Naive thymus-derived CD4-positive, alpha-beta T cell (primary cell): ENCODE measurements at regions of chr1 and their contacts with region 1.

Region 1: DNA sequence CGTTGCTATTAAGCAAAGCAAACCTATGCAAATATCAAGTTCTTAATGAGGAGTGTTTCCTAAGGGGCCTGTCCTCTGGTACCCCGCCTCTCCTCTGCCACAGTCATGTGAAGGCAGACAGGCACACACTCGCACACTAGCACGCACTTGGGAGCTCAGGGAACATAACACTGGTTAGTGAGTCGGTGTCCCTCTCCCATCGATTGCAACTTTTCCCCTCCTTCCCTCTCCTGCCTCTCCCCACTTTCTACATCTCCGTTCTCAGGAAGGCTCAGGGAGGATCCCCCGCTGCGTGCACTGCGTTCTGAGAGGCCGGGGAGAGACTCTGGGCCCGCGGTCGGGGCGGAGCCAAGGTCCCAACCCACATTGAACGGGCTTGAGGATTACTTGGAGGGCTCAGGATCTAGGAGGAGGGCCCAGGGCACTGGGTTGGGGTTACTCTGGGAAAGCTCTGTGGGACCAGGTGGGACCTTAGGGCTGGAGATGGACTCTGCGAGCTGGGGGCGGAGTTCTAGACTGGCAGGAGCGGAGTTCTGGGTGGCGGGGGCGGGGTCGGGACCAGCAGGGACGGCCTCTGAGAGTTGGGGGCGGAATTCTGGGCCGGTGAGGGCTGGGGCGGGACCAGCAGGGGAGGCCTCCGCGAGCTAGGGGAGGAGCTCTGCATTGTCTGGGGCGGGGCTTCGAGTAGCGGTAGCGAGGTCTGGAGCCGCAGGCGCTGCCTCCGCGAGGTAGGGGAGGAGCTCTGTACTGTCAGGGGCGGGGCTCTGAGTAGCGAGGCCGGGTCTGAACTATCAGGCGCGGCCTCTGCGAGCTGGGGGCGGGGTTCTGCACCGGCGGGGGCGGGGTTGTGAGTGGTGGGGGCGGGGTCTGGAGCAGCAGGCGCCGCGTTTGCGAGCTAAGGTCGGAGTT is 533 bp upstream of the LEPR start:
- DNase-seq: peak; percentile 93 to 99 (median 98)
- ATAC-seq: peak; percentile 97
- H3K4me3 ChIP-seq: peak overlapping the region; percentile 86
- H3K4me3 Mint-ChIP-seq: no peak overlapping the region
- H3K27ac ChIP-seq: peak overlapping the region; percentile 78
- H3K27ac Mint-ChIP-seq: peak overlapping the region in 7 of 9 donors; percentile 84 to 97 (median 95)
- H3K4me1 ChIP-seq: peaks cover 0 to 8% of the 10 kb centered on the region in 2 donors
- H3K4me1 Mint-ChIP-seq: peaks cover 0 to 31% (median 22%) of the 10 kb centered on the region in 7 donors
- H3K27me3 ChIP-seq: no peaks in the 10 kb centered on the region
- H3K27me3 Mint-ChIP-seq: peaks cover 0 to 12% (median 0%) of the 10 kb centered on the region in 5 donors

Region 2: GRCh38 chr1:63522891-63523728 is 1896.8 kb before region 1 on chr1 and contains the starts of genes EFCAB7 and ITGB3BP:
- CTCF ChIA-PET with region 1: no interaction called
- POLR2A ChIA-PET with region 1: no interaction called
- intact Hi-C with region 1: loop called in 1 of 2 experiments (anchors 5 kb)
- DNase-seq: peak; percentile 73 to 86 (median 82)
- ATAC-seq: peak; percentile 92
- H3K4me3 ChIP-seq: peak within 1 kb of the TSS; percentile 83
- H3K4me3 Mint-ChIP-seq: peak within 1 kb of the TSS; percentile 82 to 100 (median 98)
- H3K27ac ChIP-seq: peak within 1 kb of the TSS; percentile 78
- H3K27ac Mint-ChIP-seq: peak within 1 kb of the TSS; percentile 93 to 99 (median 97)
- H3K4me1 ChIP-seq: peaks cover 7 to 13% of the 10 kb centered on the region in 2 donors
- H3K4me1 Mint-ChIP-seq: peaks cover 12 to 47% (median 36%) of the 10 kb centered on the region in 7 donors
- H3K27me3 ChIP-seq: no peaks in the 10 kb centered on the region
- H3K27me3 Mint-ChIP-seq: peaks cover 0 to 2% (median 0%) of the 10 kb centered on the region in 5 donors
- total RNA-seq, gene EFCAB7: 4.1 to 13.5 (median 9.2) TPM
- total RNA-seq, gene ITGB3BP: 16.5 to 52.6 (median 32.9) TPM

Region 3: DNA sequence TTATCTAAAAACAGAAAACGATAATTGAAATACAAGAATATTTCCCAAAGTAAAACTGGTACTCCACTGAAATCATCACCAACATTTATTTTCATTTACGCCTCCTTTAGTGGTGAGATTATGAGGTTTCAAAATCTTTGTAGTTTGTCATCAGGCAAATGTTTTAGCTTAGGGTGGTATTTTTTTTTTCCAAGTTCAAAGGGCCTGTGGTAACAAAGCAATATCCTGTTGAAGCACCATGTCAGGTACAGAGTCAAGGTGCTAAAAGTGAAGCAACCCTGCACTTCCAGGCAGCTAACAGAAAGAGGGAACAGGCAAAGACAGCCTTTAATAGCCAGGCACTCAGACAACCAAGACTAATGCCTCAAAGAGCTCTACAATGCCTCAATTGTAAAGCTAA is 542.8 kb before region 1 on chr1:
- CTCF ChIA-PET with region 1: no interaction called
- POLR2A ChIA-PET with region 1: no interaction called
- intact Hi-C with region 1: loop called in 1 of 2 experiments (anchors 5 kb)
- DNase-seq: peak in 7 of 9 donors; percentile 75 to 90 (median 87)
- ATAC-seq: peak; percentile 96
- H3K4me3 ChIP-seq: peak overlapping the region; percentile 8
- H3K4me3 Mint-ChIP-seq: peak overlapping the region; percentile 70 to 83 (median 76)
- H3K27ac ChIP-seq: peak overlapping the region; percentile 36
- H3K27ac Mint-ChIP-seq: peak overlapping the region; percentile 41 to 95 (median 90)
- H3K4me1 ChIP-seq: peaks cover 43 to 53% of the 10 kb centered on the region in 2 donors
- H3K4me1 Mint-ChIP-seq: peaks cover 38 to 88% (median 84%) of the 10 kb centered on the region in 7 donors
- H3K27me3 ChIP-seq: no peaks in the 10 kb centered on the region
- H3K27me3 Mint-ChIP-seq: no peaks in the 10 kb centered on the region

Region 4: GRCh38 chr1:65067491-65068201 is 352.3 kb before region 1 on chr1:
- CTCF ChIA-PET with region 1: no interaction called
- POLR2A ChIA-PET with region 1: interaction called, 4 read pairs
- intact Hi-C with region 1: loop called (anchors 1 to 2 kb)
- DNase-seq: peak; percentile 48 to 75 (median 67)
- ATAC-seq: peak; percentile 39
- H3K4me3 ChIP-seq: peak overlapping the region; percentile 78
- H3K4me3 Mint-ChIP-seq: peak overlapping the region; percentile 85 to 99 (median 97)
- H3K27ac ChIP-seq: peak overlapping the region; percentile 90
- H3K27ac Mint-ChIP-seq: peak overlapping the region; percentile 93 to 100 (median 100)
- H3K4me1 ChIP-seq: peaks cover 16 to 24% of the 10 kb centered on the region in 2 donors
- H3K4me1 Mint-ChIP-seq: peaks cover 43 to 62% (median 55%) of the 10 kb centered on the region in 7 donors
- H3K27me3 ChIP-seq: no peaks in the 10 kb centered on the region
- H3K27me3 Mint-ChIP-seq: no peaks in the 10 kb centered on the region

Region 5: GRCh38 chr1:65254319-65255034 is 165.5 kb before region 1 on chr1:
- CTCF ChIA-PET with region 1: no interaction called
- POLR2A ChIA-PET with region 1: interaction called, 7 read pairs
- intact Hi-C with region 1: loop called (anchors 1 to 2 kb)
- DNase-seq: peak; percentile 70 to 90 (median 82)
- ATAC-seq: peak; percentile 97
- H3K4me3 ChIP-seq: peak overlapping the region; percentile 80
- H3K4me3 Mint-ChIP-seq: peak overlapping the region; percentile 87 to 99 (median 92)
- H3K27ac ChIP-seq: peak overlapping the region; percentile 69
- H3K27ac Mint-ChIP-seq: peak overlapping the region in 5 of 9 donors; percentile 10 to 93 (median 78)
- H3K4me1 ChIP-seq: peaks cover 10 to 14% of the 10 kb centered on the region in 2 donors
- H3K4me1 Mint-ChIP-seq: peaks cover 12 to 23% (median 18%) of the 10 kb centered on the region in 7 donors
- H3K27me3 ChIP-seq: no peaks in the 10 kb centered on the region
- H3K27me3 Mint-ChIP-seq: peaks cover 0 to 31% (median 10%) of the 10 kb centered on the region in 5 donors

Region 6: DNA sequence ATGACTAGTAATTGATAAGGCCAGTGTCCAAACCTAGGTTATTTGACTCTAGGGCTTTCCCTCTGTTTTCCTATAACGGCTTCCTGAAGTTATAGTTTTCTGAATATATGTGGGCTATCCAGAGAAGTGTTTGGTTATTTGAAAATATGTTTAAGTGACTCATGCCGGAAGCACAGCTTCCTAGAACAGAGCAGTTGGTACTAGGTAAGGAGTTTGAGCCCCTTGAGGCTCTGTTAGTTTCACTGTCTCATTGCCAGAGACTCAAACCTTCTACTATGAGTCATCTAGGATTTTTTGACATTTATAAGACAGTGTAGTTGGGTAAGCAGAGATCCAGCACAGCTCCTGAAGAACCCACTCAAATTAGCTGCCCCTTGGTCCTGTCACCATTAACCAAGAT is 26.6 kb before region 1 on chr1:
- CTCF ChIA-PET with region 1: no interaction called
- POLR2A ChIA-PET with region 1: no interaction called
- intact Hi-C with region 1: loop called in 1 of 2 experiments (anchors 1 kb)
- DNase-seq: peak in 1 of 9 donors; percentile 24
- ATAC-seq: no peak
- H3K4me3 ChIP-seq: no peak overlapping the region
- H3K4me3 Mint-ChIP-seq: peak overlapping the region in 1 of 10 donors; percentile 62
- H3K27ac ChIP-seq: no peak overlapping the region
- H3K27ac Mint-ChIP-seq: peak overlapping the region in 1 of 9 donors; percentile 84
- H3K4me1 ChIP-seq: no peaks in the 10 kb centered on the region
- H3K4me1 Mint-ChIP-seq: peaks cover 0 to 81% (median 0%) of the 10 kb centered on the region in 7 donors
- H3K27me3 ChIP-seq: no peaks in the 10 kb centered on the region
- H3K27me3 Mint-ChIP-seq: no peaks in the 10 kb centered on the region

Region 7: GRCh38 chr1:66374561-66375111 is 954.7 kb after region 1 on chr1:
- CTCF ChIA-PET with region 1: no interaction called
- POLR2A ChIA-PET with region 1: no interaction called
- intact Hi-C with region 1: loop called in 1 of 2 experiments (anchors 1 kb)
- DNase-seq: peak in 7 of 9 donors; percentile 27 to 49 (median 40)
- ATAC-seq: peak; percentile 83
- H3K4me3 ChIP-seq: no peak overlapping the region
- H3K4me3 Mint-ChIP-seq: peak overlapping the region in 9 of 10 donors; percentile 46 to 83 (median 67)
- H3K27ac ChIP-seq: peak overlapping the region; percentile 62
- H3K27ac Mint-ChIP-seq: peak overlapping the region; percentile 88 to 96 (median 92)
- H3K4me1 ChIP-seq: peaks cover 51 to 53% of the 10 kb centered on the region in 2 donors
- H3K4me1 Mint-ChIP-seq: peaks cover 52 to 74% (median 65%) of the 10 kb centered on the region in 7 donors
- H3K27me3 ChIP-seq: no peaks in the 10 kb centered on the region
- H3K27me3 Mint-ChIP-seq: no peaks in the 10 kb centered on the region